Sigmoid colon (tissue), 7 donors: ENCODE measurements at regions of chr17 and their contacts with region 1.

Region 1: GRCh38 chr17:11279847-11280246 is 38.8 kb downstream of the SHISA6 start:
- DNase-seq: no peak
- H3K4me3 ChIP-seq: no peak overlapping the region
- H3K27ac ChIP-seq: no peak overlapping the region
- H3K4me1 ChIP-seq: no peaks in the 10 kb centered on the region
- H3K27me3 ChIP-seq: no peaks in the 10 kb centered on the region
- CTCF ChIP-seq: no peak
- EP300 ChIP-seq: no peak
- POLR2A ChIP-seq: no peak

Region 2: DNA sequence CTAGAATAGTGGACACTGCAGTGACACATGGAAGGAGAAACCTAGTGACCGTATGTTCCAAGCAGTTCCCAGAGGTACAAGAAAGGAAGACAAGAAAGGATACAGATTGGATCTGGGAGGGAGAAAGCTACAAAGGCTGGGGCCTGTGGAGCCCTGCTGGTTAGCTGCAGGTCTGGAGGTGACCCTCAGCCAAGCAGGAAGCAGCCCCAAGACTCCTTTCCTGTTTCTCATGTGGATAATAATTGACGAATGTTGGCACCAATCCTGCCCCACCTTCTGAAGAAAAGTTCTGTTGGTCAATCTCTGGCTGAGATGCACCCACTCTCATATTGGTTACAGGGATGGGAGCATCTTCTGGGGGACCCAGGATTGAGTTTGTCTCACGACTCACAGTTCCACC is 61.0 kb after region 1 on chr17:
- intact Hi-C with region 1: loop called (anchors 10 kb)
- DNase-seq: no peak
- H3K4me3 ChIP-seq: no peak overlapping the region
- H3K27ac ChIP-seq: no peak overlapping the region
- H3K4me1 ChIP-seq: no peaks in the 10 kb centered on the region
- H3K27me3 ChIP-seq: no peaks in the 10 kb centered on the region
- CTCF ChIP-seq: no peak
- EP300 ChIP-seq: no peak
- POLR2A ChIP-seq: no peak

Region 3: GRCh38 chr17:11742886-11743285 is 463.0 kb after region 1 on chr17:
- intact Hi-C with region 1: no loop called
- DNase-seq: no peak
- H3K4me3 ChIP-seq: no peak overlapping the region
- H3K27ac ChIP-seq: no peak overlapping the region
- H3K4me1 ChIP-seq: no peaks in the 10 kb centered on the region
- H3K27me3 ChIP-seq: no peaks in the 10 kb centered on the region
- CTCF ChIP-seq: no peak
- EP300 ChIP-seq: no peak
- POLR2A ChIP-seq: no peak